ENCODE measurements at regions of chr5 and their contacts with region 1.

Region 1: GRCh38 chr5:59673438-59674058 is 220.0 kb downstream of the PDE4D start:
- DNase-seq: no peak
- H3K4me3 ChIP-seq: no peak overlapping the region
- H3K27ac ChIP-seq: no peak overlapping the region
- H3K27me3 ChIP-seq: no peaks in the 10 kb centered on the region
- CTCF ChIP-seq: peak; percentile 71 to 98 (median 90)

Region 2: GRCh38 chr5:59188419-59189225 is 484.9 kb before region 1 on chr5:
- intact Hi-C with region 1: loop called (anchors 10 kb)
- DNase-seq: peak; percentile 40 to 75 (median 68)
- H3K4me3 ChIP-seq: peak overlapping the region in 57 of 59 donors; percentile 0 to 64 (median 39)
- H3K27ac ChIP-seq: peak overlapping the region in 24 of 59 donors; percentile 0 to 70 (median 44)
- H3K27me3 ChIP-seq: no peaks in the 10 kb centered on the region
- CTCF ChIP-seq: peak; percentile 74 to 99 (median 92)

Region 3: GRCh38 chr5:59193616-59194319 is 479.8 kb before region 1 on chr5:
- intact Hi-C with region 1: loop called (anchors 10 kb)
- DNase-seq: no peak
- H3K4me3 ChIP-seq: no peak overlapping the region
- H3K27ac ChIP-seq: peak overlapping the region in 1 of 59 donors; percentile 7
- H3K27me3 ChIP-seq: no peaks in the 10 kb centered on the region
- CTCF ChIP-seq: no peak

Region 4: GRCh38 chr5:59390074-59390659 is 283.4 kb before region 1 on chr5:
- intact Hi-C with region 1: loop called (anchors 2 to 5 kb)
- DNase-seq: peak in 1 of 10 donors; percentile 8
- H3K4me3 ChIP-seq: no peak overlapping the region
- H3K27ac ChIP-seq: no peak overlapping the region
- H3K27me3 ChIP-seq: no peaks in the 10 kb centered on the region
- CTCF ChIP-seq: peak; percentile 70 to 96 (median 85)

Region 5: DNA sequence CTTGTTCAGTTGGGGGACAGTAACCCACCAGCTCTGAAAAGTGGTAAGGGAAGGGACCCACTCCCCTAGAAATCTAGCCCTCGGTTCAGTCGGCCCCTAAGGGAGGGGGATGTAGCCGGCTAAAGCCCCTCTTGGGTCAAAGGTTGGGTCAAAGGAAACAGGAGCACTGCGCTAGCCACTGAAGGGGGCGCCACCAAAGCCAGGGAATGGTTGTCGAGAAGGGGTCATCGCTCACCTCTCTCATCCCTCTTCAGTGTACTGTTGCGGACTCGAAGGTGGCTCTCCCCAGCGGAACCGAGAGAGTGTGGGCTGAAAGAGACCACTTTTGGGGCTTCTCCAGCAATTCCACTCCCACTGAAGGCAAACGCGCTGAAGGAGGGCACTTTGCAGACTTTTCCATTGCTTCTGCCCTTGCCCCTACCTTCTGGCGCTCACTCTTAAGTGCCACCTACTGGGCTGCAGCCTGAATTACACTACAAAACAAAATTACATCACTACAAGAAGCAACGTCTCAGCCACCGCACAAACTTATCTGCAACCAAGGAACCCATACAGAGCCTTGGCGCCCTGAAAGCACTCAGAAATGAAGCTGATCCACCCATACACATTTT is 176.9 kb before region 1 on chr5:
- intact Hi-C with region 1: loop called in 1 of 2 experiments (anchors 5 kb)
- DNase-seq: no peak
- H3K4me3 ChIP-seq: no peak overlapping the region
- H3K27ac ChIP-seq: no peak overlapping the region
- H3K27me3 ChIP-seq: no peaks in the 10 kb centered on the region
- CTCF ChIP-seq: peak in 17 of 56 donors; percentile 8 to 30 (median 16)

Region 6: DNA sequence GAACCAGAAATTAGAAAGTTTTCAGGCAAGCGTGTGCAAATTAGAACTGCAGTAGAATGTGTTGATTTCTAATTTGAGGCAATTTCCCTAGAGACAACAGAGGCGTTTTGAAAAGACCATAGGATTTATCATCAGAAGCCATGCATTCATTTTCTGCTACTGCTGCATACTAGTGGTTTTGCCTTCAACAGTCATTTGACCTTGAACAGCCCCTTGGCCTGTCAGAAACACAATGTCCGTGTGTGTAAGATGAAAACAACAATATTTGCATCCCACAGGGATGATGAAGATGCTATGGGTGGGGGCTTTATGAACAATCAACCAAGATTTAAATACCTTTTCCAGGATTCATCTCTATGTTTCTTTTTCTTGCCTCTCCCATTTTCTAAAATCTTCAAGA is 146.3 kb after region 1 on chr5:
- intact Hi-C with region 1: no loop called
- DNase-seq: no peak
- H3K4me3 ChIP-seq: no peak overlapping the region
- H3K27ac ChIP-seq: no peak overlapping the region
- H3K27me3 ChIP-seq: no peaks in the 10 kb centered on the region
- CTCF ChIP-seq: no peak